Right ventricle myocardium superior (tissue), 1 donor: ENCODE measurements at regions of chr12 and their contacts with region 1.

Region 1: GRCh38 chr12:92145731-92146496 is at the start of gene BTG1:
- DNase-seq: peak; percentile 98
- ATAC-seq: peak; percentile 90
- total RNA-seq, gene BTG1: 74.1 TPM

Region 2: DNA sequence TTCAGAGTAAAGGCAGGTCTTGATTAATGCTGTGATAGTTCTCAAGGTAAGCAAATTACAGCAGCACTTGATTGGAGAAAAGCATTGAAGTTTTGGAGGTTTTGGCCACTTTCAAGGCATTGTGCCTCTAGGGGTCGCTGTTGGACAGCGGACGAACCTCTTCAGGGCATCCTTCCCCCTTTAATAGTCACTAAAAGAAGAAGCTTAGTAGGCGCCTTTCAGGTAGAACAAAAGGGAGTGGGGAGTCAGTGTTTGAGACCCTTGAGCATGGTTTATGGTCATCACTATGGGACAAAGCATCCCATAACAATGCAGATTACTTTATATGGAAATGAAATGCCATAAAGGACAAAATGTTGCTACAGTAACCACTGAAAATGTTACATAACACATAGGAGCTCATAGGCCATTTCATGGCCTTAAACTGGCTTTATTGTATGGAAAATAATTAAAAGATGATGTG is 763.8 kb before region 1 on chr12:
- intact Hi-C with region 1: loop called (anchors 10 kb)
- DNase-seq: peak; percentile 85
- ATAC-seq: peak; percentile 91

Region 3: DNA sequence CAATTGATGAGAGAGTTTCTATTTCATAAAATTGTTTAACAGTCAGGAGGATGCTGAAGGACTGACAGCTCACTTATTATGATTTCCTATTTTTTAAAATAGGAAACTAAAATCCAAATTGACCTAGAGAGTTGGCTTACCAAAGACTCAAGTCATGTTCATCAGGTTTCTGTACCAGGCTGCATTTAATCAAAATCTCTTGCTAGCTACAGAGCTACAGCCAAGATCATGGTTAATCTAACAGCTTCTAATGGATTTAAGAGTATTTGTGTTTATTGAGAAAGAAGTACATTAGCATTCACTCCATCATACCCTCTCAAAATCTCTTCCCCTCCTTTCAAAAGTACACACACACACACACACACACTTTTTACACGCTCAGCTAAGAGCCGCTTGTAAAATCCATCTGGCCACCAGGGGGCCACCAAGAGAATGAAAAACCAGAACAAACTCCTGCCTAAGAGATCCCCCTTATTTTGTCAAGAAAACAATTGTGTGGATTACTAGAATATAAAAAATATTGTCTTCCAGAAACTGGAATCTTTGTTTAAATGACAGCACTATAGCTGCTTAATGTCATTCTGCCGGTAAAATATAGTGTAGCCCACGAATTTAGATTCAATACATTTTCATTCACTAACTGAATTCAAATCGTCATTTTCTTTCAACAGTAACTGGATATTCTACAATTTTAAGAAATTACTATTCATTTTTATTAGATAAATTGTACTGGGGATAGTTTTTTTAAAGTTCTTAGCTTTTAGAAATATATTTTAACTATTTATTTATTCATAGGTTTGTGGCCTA is 334.2 kb before region 1 on chr12:
- intact Hi-C with region 1: loop called (anchors 5 kb)
- DNase-seq: peak; percentile 82
- ATAC-seq: peak; percentile 85

Region 4: GRCh38 chr12:92002673-92003382 is 143.1 kb before region 1 on chr12:
- intact Hi-C with region 1: loop called (anchors 5 kb)
- DNase-seq: no peak
- ATAC-seq: peak; percentile 85

Region 5: DNA sequence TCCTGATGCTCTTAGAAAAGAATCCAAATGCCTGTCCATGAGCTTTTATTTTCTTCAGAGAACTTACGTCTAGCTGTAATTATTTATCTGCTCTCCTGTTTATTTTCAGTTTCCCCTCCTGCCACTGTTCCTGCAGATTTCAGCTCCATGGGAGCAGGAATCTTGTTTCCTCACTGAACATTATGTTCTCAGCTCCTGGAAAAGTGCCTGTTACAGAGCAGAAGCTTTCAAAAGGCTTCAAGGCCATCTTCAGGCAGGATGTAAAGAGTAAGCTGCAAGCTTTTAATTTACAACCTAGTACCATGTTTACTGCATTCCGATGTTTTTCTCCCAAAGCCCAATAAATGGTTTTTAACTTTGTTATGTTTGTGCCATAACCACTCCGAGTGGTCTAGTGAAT is 98.1 kb after region 1 on chr12:
- intact Hi-C with region 1: loop called (anchors 5 kb)
- DNase-seq: no peak
- ATAC-seq: peak; percentile 94

Region 6: GRCh38 chr12:92570056-92570753 is 424.3 kb after region 1 on chr12:
- intact Hi-C with region 1: loop called (anchors 5 kb)
- DNase-seq: no peak
- ATAC-seq: peak; percentile 91